Heart right ventricle (tissue), 16 donors: ENCODE measurements at regions of chr7 and their contacts with region 1.

Region 1: DNA sequence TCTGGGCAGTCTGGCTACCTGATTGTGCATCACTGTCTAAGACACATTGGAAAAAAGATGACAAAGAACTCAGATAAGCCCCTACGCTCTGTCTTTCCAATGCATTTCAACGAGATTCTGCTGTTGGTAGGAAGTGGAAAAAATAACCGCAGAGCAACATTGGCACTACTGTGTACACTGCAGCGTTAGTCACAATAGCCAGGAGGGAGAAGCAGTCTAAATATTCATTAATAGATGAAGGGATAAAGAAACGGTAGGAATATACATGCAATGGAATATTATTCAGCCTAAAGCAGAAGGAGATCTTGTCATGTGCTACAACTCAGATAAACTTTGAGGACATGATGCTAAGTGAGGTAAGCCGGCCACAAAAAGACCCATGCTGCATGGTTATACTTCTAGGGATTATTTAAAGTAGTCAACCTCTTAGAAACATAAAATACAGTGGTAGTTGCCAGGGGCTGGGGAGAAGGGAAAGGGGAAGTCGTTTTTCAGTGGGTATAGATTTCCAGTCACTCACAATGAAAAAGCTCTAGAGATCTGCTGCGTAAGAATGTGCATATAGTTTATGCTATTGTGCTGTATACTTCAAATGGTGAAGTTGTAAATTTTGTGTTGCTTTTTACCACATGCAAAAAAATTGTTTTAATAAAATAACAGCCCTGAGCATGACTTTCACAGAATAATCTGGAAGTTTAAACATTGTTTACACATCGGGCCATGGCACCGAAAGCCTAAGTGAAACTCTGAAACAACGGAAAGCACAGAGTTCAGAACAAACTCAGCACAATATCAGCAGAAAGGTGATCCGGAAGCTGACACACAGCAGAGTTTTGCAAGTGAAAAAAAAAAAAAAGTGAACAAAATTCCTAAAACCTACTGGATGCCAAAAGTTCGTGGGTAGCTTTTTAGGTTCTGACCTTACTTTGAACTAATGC is 40.1 kb downstream of the ELMO1 start:
- DNase-seq: no peak
- ATAC-seq: peak in 2 of 8 donors; percentile 17 to 26
- H3K4me3 ChIP-seq: peak overlapping the region in 1 of 10 donors; percentile 22
- H3K27ac ChIP-seq: peak overlapping the region in 4 of 10 donors; percentile 5 to 55 (median 44)
- H3K4me1 ChIP-seq: peaks cover 7 to 76% (median 51%) of the 10 kb centered on the region in 9 donors
- H3K27me3 ChIP-seq: no peaks in the 10 kb centered on the region
- CTCF ChIP-seq: no peak

Region 2: DNA sequence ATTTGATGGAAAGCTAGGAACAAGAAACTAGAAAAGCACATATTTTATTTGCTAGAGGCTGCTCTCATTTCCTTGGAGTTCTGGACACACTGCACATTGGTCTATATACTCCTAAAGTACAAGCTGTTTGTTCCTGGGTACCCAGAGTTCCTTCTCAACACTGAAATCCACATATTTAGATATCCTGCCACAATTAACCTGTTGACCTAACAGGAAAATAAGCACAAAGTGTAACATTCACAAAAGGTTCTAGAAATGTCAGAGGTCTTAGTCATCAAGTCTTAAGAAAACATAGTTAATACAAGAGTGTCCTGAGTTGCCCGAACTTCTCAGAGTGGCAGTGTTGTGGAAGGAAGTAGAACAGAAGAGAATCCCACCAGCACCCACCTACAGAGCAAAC is 75.5 kb before region 1 on chr7:
- intact Hi-C with region 1: no loop called
- DNase-seq: no peak
- ATAC-seq: peak in 6 of 8 donors; percentile 42 to 87 (median 64)
- H3K4me3 ChIP-seq: no peak overlapping the region
- H3K27ac ChIP-seq: peak overlapping the region in 5 of 10 donors; percentile 13 to 76 (median 53)
- H3K4me1 ChIP-seq: peaks cover 0 to 41% (median 18%) of the 10 kb centered on the region in 9 donors
- H3K27me3 ChIP-seq: no peaks in the 10 kb centered on the region
- CTCF ChIP-seq: no peak

Region 3: DNA sequence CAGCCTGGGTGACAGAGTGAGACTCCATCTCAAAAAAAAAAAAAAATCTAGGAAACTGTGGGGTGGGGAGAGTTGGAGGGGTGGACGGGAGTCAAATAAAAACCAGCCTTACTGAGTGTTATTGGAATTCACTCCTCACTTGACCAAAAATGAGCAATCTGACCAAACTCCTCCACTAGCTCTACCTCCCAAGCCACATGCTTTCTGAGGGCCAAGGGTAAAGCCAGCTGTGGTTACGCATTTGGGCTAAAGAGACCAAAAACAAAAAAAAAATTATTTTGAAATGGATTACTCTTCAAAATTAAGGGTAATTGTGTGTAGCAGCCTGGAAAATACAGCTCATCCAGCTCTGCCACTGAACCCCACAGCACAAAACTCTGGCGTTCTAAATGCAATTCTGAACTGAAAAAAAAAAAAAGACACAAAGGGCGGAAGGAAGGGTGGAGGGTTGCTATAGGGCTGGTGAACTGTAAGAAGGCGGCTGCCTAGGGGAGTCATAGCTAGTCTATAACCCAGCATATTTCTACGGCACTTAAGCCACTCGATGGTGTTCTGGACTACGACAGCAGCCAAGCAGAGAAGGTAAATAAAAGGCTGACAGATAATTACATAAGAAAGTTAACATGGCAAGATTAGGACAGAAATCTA is 32.3 kb after region 1 on chr7:
- intact Hi-C with region 1: loop called in 2 of 10 experiments (anchors 5 kb)
- DNase-seq: peak in 1 of 2 donors; percentile 41
- ATAC-seq: peak; percentile 76 to 93 (median 90)
- H3K4me3 ChIP-seq: peak overlapping the region in 4 of 10 donors; percentile 2 to 20 (median 12)
- H3K27ac ChIP-seq: peak overlapping the region; percentile 72 to 93 (median 78)
- H3K4me1 ChIP-seq: peaks cover 2 to 74% (median 52%) of the 10 kb centered on the region in 9 donors
- H3K27me3 ChIP-seq: peaks cover 0 to under 1% (median 0%) of the 10 kb centered on the region in 7 donors
- CTCF ChIP-seq: no peak

Region 4: DNA sequence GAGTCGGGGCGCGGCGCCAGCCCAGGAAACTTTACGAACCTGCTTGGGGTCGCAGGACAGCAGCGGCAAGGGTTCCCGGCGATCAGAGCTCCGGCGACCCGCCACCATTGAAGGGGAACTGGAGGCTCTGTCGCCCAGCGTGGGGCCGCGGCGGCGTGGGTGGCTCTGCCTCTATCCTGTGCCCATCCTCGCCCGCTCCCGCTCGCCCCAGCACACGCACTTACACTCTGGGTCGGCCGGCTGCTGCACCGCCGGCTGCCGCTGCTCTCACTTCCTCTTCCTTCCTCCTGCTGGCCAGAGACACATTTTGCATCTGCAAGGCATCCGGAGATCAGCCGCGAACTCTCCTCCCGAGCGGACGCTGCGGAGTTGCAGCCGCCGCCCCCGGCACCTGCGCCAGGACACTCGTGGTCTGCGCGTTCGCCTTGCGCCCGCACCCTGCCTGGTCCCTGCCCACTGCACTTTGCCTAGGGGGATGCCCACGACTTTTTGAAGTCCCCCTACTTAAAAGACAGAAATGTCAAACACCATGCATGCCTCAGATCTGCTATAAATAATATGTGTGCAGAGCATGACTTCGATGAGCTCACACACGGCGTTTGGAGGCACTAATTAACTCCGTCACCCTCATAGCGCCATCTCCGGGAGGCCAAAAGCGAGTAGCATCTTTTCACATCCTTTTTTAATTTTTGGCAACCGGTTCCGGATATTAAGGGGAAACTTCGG is 40.2 kb after region 1 on chr7 and contains the start of gene ELMO1:
- intact Hi-C with region 1: loop called in 2 of 10 experiments (anchors 5 kb)
- DNase-seq: peak; percentile 76 to 79
- ATAC-seq: peak; percentile 77 to 89 (median 85)
- H3K4me3 ChIP-seq: peak within 1 kb of the TSS; percentile 59 to 86 (median 78)
- H3K27ac ChIP-seq: peak within 1 kb of the TSS; percentile 82 to 98 (median 94)
- H3K4me1 ChIP-seq: peaks cover 0 to 47% (median 20%) of the 10 kb centered on the region in 9 donors
- H3K27me3 ChIP-seq: peaks cover 0 to 22% (median 0%) of the 10 kb centered on the region in 7 donors
- CTCF ChIP-seq: peak in 8 of 9 donors; percentile 20 to 63 (median 51)
- total RNA-seq, gene ELMO1: 8.8 to 18.0 (median 14.0) TPM